Prostate gland (tissue), 2 donors: ENCODE measurements at regions of chr6 and their contacts with region 1.

Region 1: GRCh38 chr6:77740380-77740779 is 87.5 kb downstream of the MEI4 start:
- DNase-seq: no peak
- H3K4me3 ChIP-seq: no peak overlapping the region
- H3K27ac ChIP-seq: no peak overlapping the region
- H3K4me1 ChIP-seq: no peaks in the 10 kb centered on the region
- H3K27me3 ChIP-seq: no peaks in the 10 kb centered on the region
- CTCF ChIP-seq: peak in 3 of 4 experiments; percentile 58 to 60 (median 60)
- POLR2A ChIP-seq: no peak

Region 2: DNA sequence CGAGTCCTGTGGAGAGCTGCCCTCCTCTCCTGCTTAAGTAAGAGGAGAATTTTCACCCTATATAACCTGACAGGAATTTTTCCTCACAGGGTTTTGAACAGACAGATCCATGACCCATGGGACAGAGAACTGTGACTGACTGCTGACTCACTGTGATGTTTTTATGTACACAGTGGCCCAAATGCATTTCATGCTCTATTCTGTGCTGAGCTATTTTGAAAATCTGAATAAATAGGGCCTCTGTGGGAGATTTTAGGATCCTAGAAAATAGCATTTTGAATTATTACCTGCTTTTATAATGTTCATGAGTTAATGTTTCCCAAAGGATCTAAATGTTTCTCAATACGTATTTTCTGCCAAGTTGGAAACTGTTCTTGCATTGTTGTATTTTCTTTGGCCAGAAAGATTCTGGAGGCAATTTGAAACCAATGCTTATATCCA is 854.5 kb before region 1 on chr6:
- intact Hi-C with region 1: no loop called
- DNase-seq: no peak
- H3K4me3 ChIP-seq: no peak overlapping the region
- H3K27ac ChIP-seq: no peak overlapping the region
- H3K4me1 ChIP-seq: no peaks in the 10 kb centered on the region
- H3K27me3 ChIP-seq: no peaks in the 10 kb centered on the region
- CTCF ChIP-seq: no peak
- POLR2A ChIP-seq: no peak

Region 3: DNA sequence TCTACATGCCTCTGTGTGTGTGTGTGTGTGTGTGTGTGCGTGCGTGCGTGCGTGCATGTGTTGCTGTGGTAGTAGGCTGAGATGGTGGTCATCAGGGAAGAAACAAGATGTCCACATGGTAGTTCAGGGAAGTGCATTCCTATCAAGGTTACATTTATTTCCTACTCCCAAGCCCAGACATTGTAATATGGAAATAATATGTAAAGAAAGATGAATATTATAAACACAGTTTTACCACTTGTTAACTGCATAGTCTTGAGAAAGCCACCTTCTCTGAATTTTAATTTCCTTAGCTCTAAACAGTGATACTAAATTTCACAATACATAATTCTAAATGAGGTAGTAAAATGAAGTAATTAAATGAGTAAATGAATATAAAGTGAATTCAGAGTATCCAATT is 73.5 kb before region 1 on chr6:
- intact Hi-C with region 1: no loop called
- DNase-seq: no peak
- H3K4me3 ChIP-seq: no peak overlapping the region
- H3K27ac ChIP-seq: no peak overlapping the region
- H3K4me1 ChIP-seq: no peaks in the 10 kb centered on the region
- H3K27me3 ChIP-seq: no peaks in the 10 kb centered on the region
- CTCF ChIP-seq: no peak
- POLR2A ChIP-seq: no peak

Region 4: DNA sequence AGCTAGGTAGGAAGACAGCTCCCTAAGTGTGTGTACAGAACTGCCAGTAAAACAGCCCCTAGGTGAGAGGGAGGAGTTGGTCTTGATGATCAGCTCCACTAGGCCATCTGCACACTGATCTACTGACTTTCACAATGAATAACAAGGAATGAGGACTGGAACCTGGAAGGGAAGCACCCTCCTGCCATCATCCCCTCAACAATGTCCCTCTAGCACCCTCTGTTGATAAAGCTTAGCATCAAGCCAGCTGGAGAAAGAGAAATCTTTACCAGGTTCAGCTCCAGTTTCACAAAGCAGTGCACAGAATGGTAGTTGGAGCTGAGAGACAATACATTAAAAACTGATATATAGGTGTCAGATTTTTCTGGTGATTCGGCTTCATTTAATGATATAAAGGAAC is 1069.8 kb after region 1 on chr6:
- intact Hi-C with region 1: loop called (anchors 10 kb)
- DNase-seq: peak; percentile 58
- H3K4me3 ChIP-seq: no peak overlapping the region
- H3K27ac ChIP-seq: peak overlapping the region in 1 of 2 donors; percentile 20
- H3K4me1 ChIP-seq: no peaks in the 10 kb centered on the region
- H3K27me3 ChIP-seq: no peaks in the 10 kb centered on the region
- CTCF ChIP-seq: peak; percentile 22 to 57 (median 50)
- POLR2A ChIP-seq: no peak